PC-9 (cell line): ENCODE measurements at regions of chr11 and their contacts with region 1.

Region 1: GRCh38 chr11:77879218-77879617 is 58.3 kb downstream of the AAMDC start:
- DNase-seq: peak in 1 of 2 experiments; percentile 31
- H3K4me3 ChIP-seq: no peak overlapping the region
- H3K27ac ChIP-seq: no peak overlapping the region
- H3K4me1 ChIP-seq: no peaks in the 10 kb centered on the region
- H3K27me3 ChIP-seq: no peaks in the 10 kb centered on the region
- CTCF ChIP-seq: no peak

Region 2: DNA sequence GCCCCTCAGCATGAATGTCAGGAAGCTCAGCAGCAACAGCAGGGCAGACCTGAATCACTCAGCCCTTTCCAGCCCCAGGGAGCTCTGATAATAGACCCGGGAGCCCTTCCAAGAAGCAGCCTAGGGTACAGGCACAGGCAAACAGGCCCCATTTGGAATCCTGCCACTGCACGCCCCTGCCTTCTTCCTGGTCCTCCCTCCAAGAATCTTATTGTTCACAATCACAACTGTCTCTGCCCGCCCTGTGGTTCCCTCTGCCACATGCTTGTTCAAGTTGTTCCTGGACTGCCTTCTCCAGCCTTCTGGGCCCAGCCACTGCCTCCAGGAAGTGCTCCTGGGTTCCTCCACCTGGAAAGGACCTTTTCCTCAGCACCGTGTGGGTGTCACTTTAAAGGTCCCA is 1263.3 kb before region 1 on chr11:
- CTCF ChIA-PET with region 1: no interaction called
- POLR2A ChIA-PET with region 1: no interaction called
- intact Hi-C with region 1: no loop called
- DNase-seq: no peak
- H3K4me3 ChIP-seq: no peak overlapping the region
- H3K27ac ChIP-seq: no peak overlapping the region
- H3K4me1 ChIP-seq: no peaks in the 10 kb centered on the region
- H3K27me3 ChIP-seq: peaks cover 4% of the 10 kb centered on the region; the same call in 1 of the 2 replicates
- CTCF ChIP-seq: no peak

Region 3: DNA sequence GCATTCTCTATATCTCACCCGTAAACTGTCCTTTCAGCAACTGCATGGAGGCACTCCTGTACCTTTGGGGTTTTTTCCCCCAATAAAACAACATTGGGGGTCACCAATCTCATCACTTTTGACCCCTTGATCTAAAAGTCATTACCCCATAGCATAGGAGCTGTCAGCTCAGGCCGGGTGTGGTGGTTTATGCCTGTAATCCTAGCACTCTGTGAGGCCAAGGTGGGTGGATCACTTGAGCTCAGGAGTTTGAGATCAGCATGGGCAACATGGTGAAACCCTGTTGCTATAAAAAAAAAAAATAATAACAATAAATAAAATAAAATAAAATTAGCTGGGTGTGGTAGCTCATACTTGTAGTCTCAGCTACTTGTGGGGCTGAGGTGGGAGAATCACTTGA is 560.6 kb before region 1 on chr11:
- CTCF ChIA-PET with region 1: no interaction called
- POLR2A ChIA-PET with region 1: interaction called, 18 read pairs
- intact Hi-C with region 1: no loop called
- DNase-seq: no peak
- H3K4me3 ChIP-seq: no peak overlapping the region
- H3K27ac ChIP-seq: no peak overlapping the region
- H3K4me1 ChIP-seq: no peaks in the 10 kb centered on the region
- H3K27me3 ChIP-seq: no peaks in the 10 kb centered on the region
- CTCF ChIP-seq: no peak

Region 4: DNA sequence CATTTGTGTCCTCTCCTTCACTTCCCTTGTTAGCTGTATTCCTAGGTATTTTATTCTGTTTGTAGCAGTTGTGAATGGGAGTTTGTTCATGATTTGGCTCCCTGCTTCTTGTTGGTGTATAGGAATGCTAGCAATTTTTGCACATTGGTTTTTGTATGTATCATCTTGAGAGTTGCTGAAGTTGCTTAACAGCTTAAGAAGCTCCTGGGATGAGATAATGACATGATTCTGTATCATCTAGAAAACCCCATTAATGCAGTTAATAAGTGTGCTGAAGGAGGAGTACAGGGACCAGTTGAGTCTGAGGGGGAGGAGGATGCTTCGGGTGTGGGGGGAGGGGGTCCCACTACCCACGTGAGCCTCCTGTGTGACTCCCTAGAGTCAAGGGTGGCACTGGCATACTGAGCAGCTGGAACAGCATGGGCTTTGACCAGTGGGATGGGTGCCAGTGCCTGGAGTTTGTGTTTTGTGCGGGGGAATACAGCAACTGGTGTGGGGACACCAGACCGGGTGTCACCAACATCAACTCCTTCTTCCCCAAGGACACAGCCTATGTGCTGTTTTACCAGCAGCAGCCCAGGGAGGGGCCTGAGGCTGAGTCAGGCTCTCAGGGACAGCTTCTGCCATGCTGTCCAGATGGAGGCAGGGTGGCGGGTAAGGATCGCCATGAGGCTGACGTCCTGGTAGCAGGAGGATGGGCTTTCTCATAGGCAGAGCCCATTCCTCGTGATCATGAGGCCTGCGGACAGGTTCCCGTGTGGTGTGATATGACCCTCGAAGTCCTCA is 333.6 kb after region 1 on chr11:
- CTCF ChIA-PET with region 1: no interaction called
- POLR2A ChIA-PET with region 1: no interaction called
- intact Hi-C with region 1: no loop called
- DNase-seq: no peak
- H3K4me3 ChIP-seq: no peak overlapping the region
- H3K27ac ChIP-seq: no peak overlapping the region
- H3K4me1 ChIP-seq: peaks cover 3% of the 10 kb centered on the region; the same call in 1 of the 2 replicates
- H3K27me3 ChIP-seq: no peaks in the 10 kb centered on the region
- CTCF ChIP-seq: no peak

Region 5: GRCh38 chr11:78290293-78291176 is 411.3 kb after region 1 on chr11:
- CTCF ChIA-PET with region 1: no interaction called
- POLR2A ChIA-PET with region 1: no interaction called
- intact Hi-C with region 1: no loop called
- DNase-seq: peak in 1 of 2 experiments; percentile 87
- H3K4me3 ChIP-seq: no peak overlapping the region
- H3K27ac ChIP-seq: peak overlapping the region; percentile 43; the same call in 1 of the 2 replicates
- H3K4me1 ChIP-seq: peaks cover 23% of the 10 kb centered on the region
- H3K27me3 ChIP-seq: no peaks in the 10 kb centered on the region
- CTCF ChIP-seq: no peak

Region 6: GRCh38 chr11:78432058-78432515 is 552.9 kb after region 1 on chr11:
- CTCF ChIA-PET with region 1: no interaction called
- POLR2A ChIA-PET with region 1: interaction called, 15 read pairs
- intact Hi-C with region 1: no loop called
- DNase-seq: peak; percentile 29 to 33
- H3K4me3 ChIP-seq: no peak overlapping the region
- H3K27ac ChIP-seq: no peak overlapping the region
- H3K4me1 ChIP-seq: no peaks in the 10 kb centered on the region; the same call in 1 of the 2 replicates
- H3K27me3 ChIP-seq: no peaks in the 10 kb centered on the region
- CTCF ChIP-seq: peak; percentile 75